ENCODE measurements at regions of chr15 and their contacts with region 1.

Region 1: DNA sequence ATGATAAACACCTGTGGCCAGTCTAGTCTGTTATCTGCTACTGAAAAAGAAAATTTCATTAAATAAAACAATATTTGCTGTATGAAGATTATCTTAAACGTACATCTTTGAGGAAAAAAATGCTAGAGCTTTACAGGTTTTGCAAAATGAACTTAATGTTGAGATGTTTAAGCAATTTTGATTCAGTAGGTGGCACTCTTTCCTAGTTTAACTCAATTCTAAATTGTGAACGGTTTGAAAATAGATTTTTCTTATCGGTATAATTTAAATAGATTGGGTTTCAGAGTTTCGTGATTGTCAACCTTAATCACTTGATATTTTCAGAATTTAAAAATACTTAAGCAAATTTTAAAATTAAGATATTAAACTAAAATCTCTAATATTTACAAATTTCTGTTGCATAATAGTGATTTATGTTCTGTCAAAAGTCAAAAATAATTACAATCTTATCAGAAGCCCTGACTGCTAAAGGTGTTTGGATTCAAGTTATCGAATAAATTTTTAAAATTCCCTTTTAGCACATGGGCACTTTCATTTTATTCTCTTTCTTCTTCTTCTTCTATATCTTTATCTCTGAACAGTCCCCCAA is 7.0 kb upstream of the RNF111 start:
- DNase-seq: peak in 4 of 5 donors; percentile 41 to 51 (median 44)
- H3K4me3 ChIP-seq: no peak overlapping the region
- H3K4me3 Mint-ChIP-seq: peak overlapping the region in 2 of 8 donors; percentile 1 to 78
- H3K27ac ChIP-seq: no peak overlapping the region
- H3K27ac Mint-ChIP-seq: peak overlapping the region in 3 of 7 donors; percentile 22 to 68 (median 29)
- H3K4me1 ChIP-seq: peaks cover 30% of the 10 kb centered on the region
- H3K4me1 Mint-ChIP-seq: peaks cover 16 to 28% (median 22%) of the 10 kb centered on the region in 4 donors
- H3K27me3 ChIP-seq: no peaks in the 10 kb centered on the region
- H3K27me3 Mint-ChIP-seq: no peaks in the 10 kb centered on the region

Region 2: GRCh38 chr15:58962662-58963565 is 17.5 kb before region 1 on chr15:
- CTCF ChIA-PET with region 1: interaction called, 10 read pairs
- POLR2A ChIA-PET with region 1: no interaction called
- intact Hi-C with region 1: no loop called
- DNase-seq: no peak
- H3K4me3 ChIP-seq: no peak overlapping the region
- H3K4me3 Mint-ChIP-seq: no peak overlapping the region
- H3K27ac ChIP-seq: no peak overlapping the region
- H3K27ac Mint-ChIP-seq: no peak overlapping the region
- H3K4me1 ChIP-seq: no peaks in the 10 kb centered on the region
- H3K4me1 Mint-ChIP-seq: no peaks in the 10 kb centered on the region
- H3K27me3 ChIP-seq: no peaks in the 10 kb centered on the region
- H3K27me3 Mint-ChIP-seq: no peaks in the 10 kb centered on the region

Region 3: DNA sequence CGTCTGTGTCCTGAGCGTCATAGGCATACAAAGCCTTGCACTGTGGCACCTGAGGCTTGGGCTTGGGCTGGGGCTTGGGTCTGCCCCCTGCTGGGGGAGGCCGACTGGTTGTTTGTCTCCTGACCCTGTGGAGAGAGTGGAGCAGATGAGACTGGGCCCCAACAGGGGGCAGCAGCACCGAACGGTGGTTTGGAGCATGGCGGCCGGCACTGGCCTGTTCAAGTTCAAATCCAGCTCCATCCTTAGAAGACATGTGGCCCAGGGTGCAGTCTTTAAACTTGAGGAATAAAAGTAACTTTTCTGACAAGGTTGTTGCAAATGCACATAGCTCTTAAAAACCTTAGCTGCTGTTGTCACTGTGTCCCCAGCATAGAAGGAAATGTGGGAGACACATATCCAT is 157.8 kb after region 1 on chr15:
- CTCF ChIA-PET with region 1: interaction called, 23 read pairs
- POLR2A ChIA-PET with region 1: no interaction called
- intact Hi-C with region 1: no loop called
- DNase-seq: peak; percentile 40 to 61 (median 56)
- H3K4me3 ChIP-seq: no peak overlapping the region
- H3K4me3 Mint-ChIP-seq: no peak overlapping the region
- H3K27ac ChIP-seq: no peak overlapping the region
- H3K27ac Mint-ChIP-seq: peak overlapping the region in 3 of 7 donors; percentile 2 to 71 (median 9)
- H3K4me1 ChIP-seq: peaks cover 7% of the 10 kb centered on the region
- H3K4me1 Mint-ChIP-seq: peaks cover 9 to 16% (median 11%) of the 10 kb centered on the region in 4 donors
- H3K27me3 ChIP-seq: no peaks in the 10 kb centered on the region
- H3K27me3 Mint-ChIP-seq: no peaks in the 10 kb centered on the region